Right ventricle myocardium superior (tissue), 1 donor: ENCODE measurements at regions of chr10 and their contacts with region 1.

Region 1: DNA sequence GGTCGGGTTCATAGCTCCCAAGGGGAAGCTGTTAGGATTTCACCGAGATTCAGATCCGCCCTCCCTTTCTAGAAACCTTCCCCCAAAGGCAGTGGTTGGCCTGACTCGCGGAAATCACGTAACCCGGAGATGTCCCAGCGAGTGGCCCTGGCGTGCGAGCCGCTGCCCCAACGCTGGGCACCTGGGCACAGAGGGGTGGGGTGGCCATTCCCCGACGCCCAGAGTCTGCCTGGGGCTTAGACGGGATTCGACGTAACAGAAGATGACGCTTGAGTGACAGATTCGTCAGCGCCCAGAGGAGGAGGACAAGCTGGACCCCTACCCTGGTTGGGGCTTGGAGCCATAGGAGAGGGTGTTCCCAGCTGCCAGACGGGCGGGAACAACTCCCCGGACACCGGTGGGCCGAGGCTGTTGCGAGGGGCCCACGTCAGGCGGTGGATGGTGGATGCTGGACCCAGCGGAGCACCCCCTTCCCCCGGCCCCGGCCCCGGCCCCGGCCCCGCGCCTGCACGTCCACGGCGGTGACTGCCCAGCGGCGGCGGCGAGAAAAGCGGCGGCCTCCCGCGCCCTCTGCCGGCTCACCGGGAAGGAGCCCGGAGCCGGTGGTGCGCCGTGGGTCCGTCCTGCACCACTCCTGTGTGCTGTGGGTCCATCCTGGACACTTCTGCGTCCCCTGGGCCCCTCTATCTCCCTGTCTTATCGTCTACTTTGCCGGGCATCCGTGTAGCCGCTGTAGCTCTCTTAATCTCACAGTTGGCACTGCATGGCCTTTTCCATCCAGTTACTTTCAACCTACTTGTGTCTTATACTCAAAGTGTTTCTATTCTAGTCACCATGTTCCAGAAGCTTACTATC is 35.4 kb upstream of the KNDC1 start:
- DNase-seq: peak; percentile 58
- ATAC-seq: peak; percentile 78

Region 2: GRCh38 chr10:132654702-132655661 is 469.6 kb before region 1 on chr10:
- intact Hi-C with region 1: loop called (anchors 10 kb)
- DNase-seq: peak; percentile 73
- ATAC-seq: peak; percentile 47

Region 3: DNA sequence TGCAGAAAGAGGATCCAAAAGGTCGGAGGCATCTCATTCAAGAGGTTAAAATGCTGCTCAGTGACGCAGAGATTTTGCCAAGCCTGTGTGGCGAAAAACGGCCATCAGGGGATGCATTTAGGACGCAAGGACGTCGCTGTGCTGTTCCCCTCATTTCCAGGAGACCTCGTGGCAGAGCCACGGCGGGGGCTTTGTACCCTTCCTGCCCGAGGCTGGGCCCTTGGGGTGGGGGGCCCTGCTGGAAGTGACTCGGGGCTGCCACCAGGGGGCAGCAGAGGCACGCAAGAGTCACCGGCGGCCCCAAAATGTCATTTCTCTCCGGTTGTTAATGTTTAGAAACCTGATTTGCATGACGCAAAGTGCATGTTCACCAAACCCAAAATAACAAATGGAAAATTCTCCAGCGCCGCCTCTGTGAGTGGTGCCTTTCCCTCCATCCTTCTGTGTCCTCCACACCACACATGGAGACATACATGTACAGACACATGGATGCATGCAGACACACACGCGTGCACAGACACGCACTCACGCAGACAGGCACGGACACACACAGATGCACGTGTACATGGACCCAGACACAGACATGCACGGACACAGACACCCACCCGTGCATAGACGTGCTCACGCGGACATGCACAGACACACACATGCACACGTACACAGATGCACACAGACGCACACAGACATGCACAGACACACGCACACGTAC is 287.6 kb before region 1 on chr10:
- intact Hi-C with region 1: loop called (anchors 5 kb)
- DNase-seq: no peak
- ATAC-seq: peak; percentile 74